ENCODE measurements at regions of chr3 and their contacts with region 1.

Region 1: GRCh38 chr3:141441381-141442364 is 45.2 kb upstream of the RASA2 start:
- DNase-seq: peak; percentile 53 to 78 (median 71)
- H3K4me3 ChIP-seq: no peak overlapping the region
- H3K4me3 Mint-ChIP-seq: peak overlapping the region in 5 of 8 donors; percentile 6 to 59 (median 52)
- H3K27ac ChIP-seq: peak overlapping the region; percentile 29
- H3K27ac Mint-ChIP-seq: peak overlapping the region; percentile 18 to 86 (median 59)
- H3K4me1 ChIP-seq: peaks cover 17% of the 10 kb centered on the region
- H3K4me1 Mint-ChIP-seq: peaks cover 20 to 55% (median 34%) of the 10 kb centered on the region in 4 donors
- H3K27me3 ChIP-seq: no peaks in the 10 kb centered on the region
- H3K27me3 Mint-ChIP-seq: no peaks in the 10 kb centered on the region

Region 2: DNA sequence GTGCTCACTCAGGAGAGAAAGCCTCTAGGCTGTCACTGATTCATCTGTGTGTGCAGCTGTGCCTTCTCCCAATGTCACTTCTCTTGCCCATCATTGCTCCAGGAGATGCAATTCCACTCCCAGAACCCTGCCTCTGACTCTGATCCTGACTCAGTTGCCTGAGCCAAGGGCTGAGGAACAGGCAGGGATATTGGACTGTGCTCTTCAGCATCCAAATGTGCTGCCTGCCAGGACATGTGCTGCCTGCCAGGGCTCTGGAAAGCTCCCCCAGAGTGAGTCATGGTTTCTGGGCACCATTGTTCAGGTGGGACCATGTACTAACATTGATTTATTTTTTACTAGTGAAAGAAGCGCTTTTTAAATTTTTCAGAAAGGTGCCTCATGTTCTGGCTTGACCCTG is 692.8 kb before region 1 on chr3:
- CTCF ChIA-PET with region 1: no interaction called
- POLR2A ChIA-PET with region 1: no interaction called
- intact Hi-C with region 1: no loop called
- DNase-seq: no peak
- H3K4me3 ChIP-seq: no peak overlapping the region
- H3K4me3 Mint-ChIP-seq: no peak overlapping the region
- H3K27ac ChIP-seq: no peak overlapping the region
- H3K27ac Mint-ChIP-seq: no peak overlapping the region
- H3K4me1 ChIP-seq: no peaks in the 10 kb centered on the region
- H3K4me1 Mint-ChIP-seq: no peaks in the 10 kb centered on the region
- H3K27me3 ChIP-seq: no peaks in the 10 kb centered on the region
- H3K27me3 Mint-ChIP-seq: peaks cover 0 to 8% of the 10 kb centered on the region in 2 donors

Region 3: DNA sequence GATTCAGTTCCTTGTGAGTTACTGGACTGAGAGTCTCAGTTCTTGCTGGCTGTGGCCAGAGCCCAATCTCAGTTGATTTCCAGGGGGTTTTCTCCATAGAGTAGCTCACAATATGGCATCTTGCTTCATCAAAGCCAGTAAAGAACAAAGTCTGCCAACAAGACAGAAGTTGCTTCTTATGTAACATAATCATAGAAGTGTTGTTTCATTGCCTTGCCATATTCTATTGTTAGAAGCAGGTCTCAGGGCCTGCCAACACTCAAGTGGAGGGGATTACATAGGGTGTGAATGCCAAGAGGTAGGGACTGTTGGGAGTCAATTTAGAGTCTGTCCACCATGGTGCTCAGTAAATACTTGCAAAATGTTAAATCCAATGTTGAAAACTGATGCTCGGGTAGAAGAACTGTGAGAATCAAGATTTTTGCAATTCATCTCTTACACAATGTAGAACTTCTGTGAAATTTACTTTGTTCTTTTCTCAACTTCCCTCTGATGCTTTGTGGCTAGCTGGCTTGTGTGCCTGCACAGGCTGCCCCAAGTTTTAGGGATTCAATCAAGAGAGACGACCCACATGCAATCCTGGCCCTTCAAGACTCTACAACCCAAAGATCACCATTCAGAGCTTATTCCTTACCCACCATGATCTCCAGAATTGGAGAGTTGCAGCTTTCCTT is 223.4 kb before region 1 on chr3:
- CTCF ChIA-PET with region 1: no interaction called
- POLR2A ChIA-PET with region 1: no interaction called
- intact Hi-C with region 1: no loop called
- DNase-seq: no peak
- H3K4me3 ChIP-seq: no peak overlapping the region
- H3K4me3 Mint-ChIP-seq: no peak overlapping the region
- H3K27ac ChIP-seq: no peak overlapping the region
- H3K27ac Mint-ChIP-seq: no peak overlapping the region
- H3K4me1 ChIP-seq: no peaks in the 10 kb centered on the region
- H3K4me1 Mint-ChIP-seq: no peaks in the 10 kb centered on the region
- H3K27me3 ChIP-seq: peaks cover 4% of the 10 kb centered on the region
- H3K27me3 Mint-ChIP-seq: peaks cover 3 to 5% of the 10 kb centered on the region in 2 donors

Region 4: GRCh38 chr3:141303481-141304223 is 138.0 kb before region 1 on chr3:
- CTCF ChIA-PET with region 1: interaction called, 93 read pairs
- POLR2A ChIA-PET with region 1: interaction called, 3 read pairs
- intact Hi-C with region 1: loop called (anchors 1 kb)
- DNase-seq: peak; percentile 69 to 79 (median 76)
- H3K4me3 ChIP-seq: no peak overlapping the region
- H3K4me3 Mint-ChIP-seq: no peak overlapping the region
- H3K27ac ChIP-seq: no peak overlapping the region
- H3K27ac Mint-ChIP-seq: peak overlapping the region in 2 of 7 donors; percentile 7 to 25
- H3K4me1 ChIP-seq: peaks cover 39% of the 10 kb centered on the region
- H3K4me1 Mint-ChIP-seq: peaks cover 27 to 50% (median 45%) of the 10 kb centered on the region in 4 donors
- H3K27me3 ChIP-seq: no peaks in the 10 kb centered on the region
- H3K27me3 Mint-ChIP-seq: no peaks in the 10 kb centered on the region

Region 5: DNA sequence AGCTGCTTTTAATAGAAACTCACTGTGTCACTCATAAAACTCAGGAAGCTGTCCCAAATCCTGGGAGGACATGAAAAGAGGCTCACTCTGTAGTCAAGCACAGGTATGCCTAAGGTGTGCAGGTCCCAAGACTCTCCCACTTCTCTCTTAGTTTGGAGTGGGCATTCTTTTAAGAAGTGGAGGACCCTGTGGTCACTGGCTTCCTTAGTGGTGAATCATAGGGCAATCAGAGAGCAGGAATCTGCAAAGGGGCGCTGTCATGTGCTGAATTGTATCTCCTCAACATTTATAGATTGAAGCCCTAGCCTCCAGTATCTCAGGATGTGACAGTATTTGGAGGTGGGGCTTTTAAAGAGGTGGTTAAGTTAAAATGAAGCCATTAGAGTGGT is 120.6 kb before region 1 on chr3:
- CTCF ChIA-PET with region 1: interaction called, 16 read pairs
- POLR2A ChIA-PET with region 1: no interaction called
- intact Hi-C with region 1: no loop called
- DNase-seq: no peak
- H3K4me3 ChIP-seq: no peak overlapping the region
- H3K4me3 Mint-ChIP-seq: peak overlapping the region in 6 of 8 donors; percentile 0 to 77 (median 62)
- H3K27ac ChIP-seq: no peak overlapping the region
- H3K27ac Mint-ChIP-seq: peak overlapping the region; percentile 48 to 93 (median 86)
- H3K4me1 ChIP-seq: peaks cover 19% of the 10 kb centered on the region
- H3K4me1 Mint-ChIP-seq: peaks cover 15 to 28% (median 23%) of the 10 kb centered on the region in 4 donors
- H3K27me3 ChIP-seq: no peaks in the 10 kb centered on the region
- H3K27me3 Mint-ChIP-seq: no peaks in the 10 kb centered on the region

Region 6: DNA sequence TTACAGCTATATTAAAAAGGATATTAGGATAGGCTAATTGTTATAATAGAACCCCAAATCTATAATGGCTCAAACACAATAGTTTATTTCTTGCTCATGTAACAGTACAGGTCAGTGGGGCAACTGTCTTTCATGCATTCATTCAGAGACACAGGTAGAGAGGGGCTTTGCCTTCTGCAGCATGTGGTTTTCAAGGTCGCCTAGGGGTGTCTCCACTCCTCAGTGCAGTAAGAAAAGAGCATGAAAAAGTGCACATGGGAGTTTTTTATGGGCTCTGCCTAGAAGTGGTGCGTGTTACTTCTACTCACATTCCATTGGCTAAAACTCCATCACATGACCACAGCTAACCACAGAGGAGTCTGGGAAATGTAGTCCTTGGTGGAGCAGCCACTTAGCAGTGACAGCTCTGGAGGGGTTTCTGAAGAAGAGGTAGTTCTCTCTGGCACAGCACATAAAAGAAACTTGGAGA is 71.6 kb before region 1 on chr3:
- CTCF ChIA-PET with region 1: interaction called, 79 read pairs
- POLR2A ChIA-PET with region 1: interaction called, 3 read pairs
- intact Hi-C with region 1: loop called (anchors 1 kb)
- DNase-seq: peak; percentile 82 to 88 (median 84)
- H3K4me3 ChIP-seq: no peak overlapping the region
- H3K4me3 Mint-ChIP-seq: no peak overlapping the region
- H3K27ac ChIP-seq: no peak overlapping the region
- H3K27ac Mint-ChIP-seq: peak overlapping the region in 6 of 7 donors; percentile 30 to 90 (median 58)
- H3K4me1 ChIP-seq: no peaks in the 10 kb centered on the region
- H3K4me1 Mint-ChIP-seq: peaks cover 5 to 11% (median 8%) of the 10 kb centered on the region in 4 donors
- H3K27me3 ChIP-seq: no peaks in the 10 kb centered on the region
- H3K27me3 Mint-ChIP-seq: no peaks in the 10 kb centered on the region

Region 7: DNA sequence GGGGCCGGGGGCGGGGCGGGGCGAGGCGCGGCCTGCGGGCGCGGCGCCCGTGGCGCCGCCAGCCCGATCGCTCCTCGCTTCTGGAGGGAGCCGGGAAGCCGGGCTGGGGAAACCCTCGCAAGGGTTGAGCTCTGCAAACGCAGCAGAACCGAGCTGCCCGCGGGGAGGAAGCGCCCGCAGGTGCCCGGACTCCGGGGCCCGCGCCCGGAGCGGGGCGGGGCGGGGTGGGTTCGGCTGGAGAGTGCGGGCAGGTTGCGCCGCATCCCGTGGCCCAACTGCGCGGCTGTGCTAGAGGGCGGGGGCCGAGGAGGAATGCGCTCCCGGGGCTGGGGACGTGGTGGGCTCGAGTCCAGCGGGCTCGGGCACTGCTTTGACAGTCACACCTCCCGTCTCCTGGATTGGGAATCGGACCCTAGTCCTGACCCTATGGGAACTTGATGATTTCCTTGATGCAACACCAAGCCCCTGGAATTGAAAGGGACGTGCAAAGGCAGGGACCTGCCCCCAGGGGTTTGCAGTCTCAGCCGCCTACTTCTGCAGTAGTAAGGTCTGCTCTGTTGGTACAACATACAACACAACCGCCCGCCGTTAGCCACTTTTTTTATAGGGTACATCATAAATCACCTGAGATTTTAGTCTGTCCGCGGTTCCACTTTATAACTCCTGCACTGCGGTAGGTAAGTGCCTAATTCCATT is 39.0 kb before region 1 on chr3:
- CTCF ChIA-PET with region 1: interaction called, 15 read pairs
- POLR2A ChIA-PET with region 1: interaction called, 3 read pairs
- intact Hi-C with region 1: loop called (anchors 1 kb)
- DNase-seq: peak; percentile 47 to 64 (median 52)
- H3K4me3 ChIP-seq: peak overlapping the region; percentile 55 to 79
- H3K4me3 Mint-ChIP-seq: peak overlapping the region; percentile 89 to 96 (median 95)
- H3K27ac ChIP-seq: peak overlapping the region; percentile 85
- H3K27ac Mint-ChIP-seq: peak overlapping the region; percentile 90 to 97 (median 95)
- H3K4me1 ChIP-seq: peaks cover 73% of the 10 kb centered on the region
- H3K4me1 Mint-ChIP-seq: peaks cover 46 to 75% (median 60%) of the 10 kb centered on the region in 4 donors
- H3K27me3 ChIP-seq: no peaks in the 10 kb centered on the region
- H3K27me3 Mint-ChIP-seq: no peaks in the 10 kb centered on the region

Region 8: DNA sequence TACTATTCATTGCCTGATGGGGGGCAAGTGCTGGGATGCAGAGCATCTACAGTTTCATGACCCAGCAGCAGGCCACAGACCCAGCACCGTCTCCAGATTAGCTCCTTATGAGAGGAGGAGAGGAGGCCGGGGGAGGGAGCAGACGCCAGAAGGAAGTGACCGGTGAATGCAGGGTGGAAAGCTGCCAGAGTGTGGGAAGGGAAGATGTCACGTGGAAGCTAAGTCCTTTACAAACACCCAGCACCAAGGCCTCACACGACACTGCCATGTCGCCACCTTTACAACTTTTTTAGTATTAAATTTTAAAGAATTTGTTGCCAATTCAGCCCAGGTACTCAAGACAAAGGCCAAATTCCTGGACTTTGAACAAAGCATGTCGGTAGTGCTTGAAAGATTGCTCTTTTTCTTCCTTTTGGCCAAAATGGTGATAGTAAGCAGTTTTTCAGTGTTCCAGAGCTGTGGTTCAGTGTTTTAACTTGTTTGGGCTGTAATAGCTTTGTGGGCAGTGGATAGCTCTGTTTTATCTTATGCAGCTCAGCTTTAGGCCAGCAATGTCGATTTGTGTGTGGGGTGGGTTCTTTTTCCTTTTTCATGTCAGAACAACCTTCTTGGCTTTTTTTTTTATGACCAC is 15.2 kb before region 1 on chr3:
- CTCF ChIA-PET with region 1: interaction called, 41 read pairs
- POLR2A ChIA-PET with region 1: interaction called, 4 read pairs
- intact Hi-C with region 1: no loop called
- DNase-seq: no peak
- H3K4me3 ChIP-seq: no peak overlapping the region
- H3K4me3 Mint-ChIP-seq: no peak overlapping the region
- H3K27ac ChIP-seq: no peak overlapping the region
- H3K27ac Mint-ChIP-seq: peak overlapping the region in 6 of 7 donors; percentile 16 to 74 (median 50)
- H3K4me1 ChIP-seq: peaks cover 27% of the 10 kb centered on the region
- H3K4me1 Mint-ChIP-seq: peaks cover 8 to 48% (median 35%) of the 10 kb centered on the region in 4 donors
- H3K27me3 ChIP-seq: no peaks in the 10 kb centered on the region
- H3K27me3 Mint-ChIP-seq: no peaks in the 10 kb centered on the region

Region 9: GRCh38 chr3:141460097-141460704 is 18.5 kb after region 1 on chr3:
- CTCF ChIA-PET with region 1: interaction called, 65 read pairs
- POLR2A ChIA-PET with region 1: interaction called, 5 read pairs
- intact Hi-C with region 1: no loop called
- DNase-seq: peak; percentile 80 to 87 (median 82)
- H3K4me3 ChIP-seq: no peak overlapping the region
- H3K4me3 Mint-ChIP-seq: no peak overlapping the region
- H3K27ac ChIP-seq: no peak overlapping the region
- H3K27ac Mint-ChIP-seq: peak overlapping the region in 2 of 7 donors; percentile 6 to 18
- H3K4me1 ChIP-seq: peaks cover under 1% of the 10 kb centered on the region
- H3K4me1 Mint-ChIP-seq: peaks cover under 1 to 13% (median 6%) of the 10 kb centered on the region in 4 donors
- H3K27me3 ChIP-seq: no peaks in the 10 kb centered on the region
- H3K27me3 Mint-ChIP-seq: no peaks in the 10 kb centered on the region

Region 10: DNA sequence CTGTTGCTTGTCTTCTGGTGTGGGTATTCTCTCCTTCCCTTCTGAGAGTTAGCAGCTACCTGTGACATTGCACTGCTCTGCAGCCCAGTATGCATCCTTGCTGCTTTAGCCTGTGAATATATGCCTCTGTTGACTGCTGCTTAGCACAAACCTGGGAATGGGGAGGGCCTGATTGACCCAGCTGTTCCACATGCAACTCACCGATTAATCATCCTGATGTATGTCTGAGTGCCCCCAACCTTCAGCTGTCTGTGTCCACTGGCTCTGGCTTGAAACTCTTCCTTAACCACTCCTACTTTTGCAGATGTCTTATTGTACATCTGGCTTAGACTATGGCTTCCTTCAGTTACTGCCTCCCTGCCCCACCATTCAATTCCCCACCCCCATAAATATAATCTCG is 164.2 kb after region 1 on chr3:
- CTCF ChIA-PET with region 1: no interaction called
- POLR2A ChIA-PET with region 1: no interaction called
- intact Hi-C with region 1: no loop called
- DNase-seq: no peak
- H3K4me3 ChIP-seq: no peak overlapping the region
- H3K4me3 Mint-ChIP-seq: no peak overlapping the region
- H3K27ac ChIP-seq: no peak overlapping the region
- H3K27ac Mint-ChIP-seq: peak overlapping the region; percentile 12 to 68 (median 39)
- H3K4me1 ChIP-seq: no peaks in the 10 kb centered on the region
- H3K4me1 Mint-ChIP-seq: peaks cover 0 to 4% (median 3%) of the 10 kb centered on the region in 4 donors
- H3K27me3 ChIP-seq: no peaks in the 10 kb centered on the region
- H3K27me3 Mint-ChIP-seq: no peaks in the 10 kb centered on the region

Region 11: DNA sequence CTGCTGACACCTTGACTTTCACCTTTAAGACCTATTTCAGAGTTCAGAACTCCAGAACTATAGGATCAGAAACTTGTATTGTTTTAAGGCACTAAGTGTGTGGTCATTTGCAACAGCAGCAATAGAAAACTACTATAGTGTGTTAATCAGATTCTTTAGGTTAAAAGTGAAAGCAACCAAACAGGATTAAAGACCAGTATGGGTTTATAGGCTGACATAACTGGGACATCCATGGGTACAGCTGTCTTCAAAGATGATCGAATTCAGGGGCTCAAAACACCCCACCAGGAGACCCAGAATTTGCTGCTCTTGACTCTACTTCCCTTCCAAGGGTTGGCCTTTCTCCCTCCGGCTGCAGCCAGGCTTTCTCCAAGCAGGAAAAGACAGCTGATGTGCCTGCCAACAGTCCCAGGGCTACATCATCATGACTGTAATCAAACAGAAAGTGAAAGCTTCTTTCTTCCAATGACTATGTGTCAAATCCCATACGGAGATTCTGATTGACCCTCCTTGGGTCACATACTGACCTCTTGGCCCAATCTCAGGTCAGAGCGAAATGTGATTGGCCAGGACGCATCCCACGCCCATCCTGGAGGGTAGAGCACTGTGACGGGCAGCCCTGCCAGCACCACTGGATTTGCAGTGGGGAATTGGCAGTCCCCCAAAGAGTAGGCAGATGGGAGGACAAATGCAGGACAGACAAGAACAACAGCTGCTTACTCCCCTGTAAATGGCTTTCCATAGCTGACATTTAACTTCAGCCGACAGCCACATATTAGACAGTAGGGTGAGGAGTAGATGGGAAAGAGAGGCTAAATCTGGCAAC is 245.0 kb after region 1 on chr3:
- CTCF ChIA-PET with region 1: no interaction called
- POLR2A ChIA-PET with region 1: no interaction called
- intact Hi-C with region 1: no loop called
- DNase-seq: peak in 3 of 5 donors; percentile 7 to 24 (median 10)
- H3K4me3 ChIP-seq: peak overlapping the region; percentile 44 to 47
- H3K4me3 Mint-ChIP-seq: peak overlapping the region; percentile 62 to 91 (median 84)
- H3K27ac ChIP-seq: no peak overlapping the region
- H3K27ac Mint-ChIP-seq: peak overlapping the region; percentile 7 to 96 (median 90)
- H3K4me1 ChIP-seq: peaks cover 11% of the 10 kb centered on the region
- H3K4me1 Mint-ChIP-seq: peaks cover 12 to 30% (median 22%) of the 10 kb centered on the region in 4 donors
- H3K27me3 ChIP-seq: no peaks in the 10 kb centered on the region
- H3K27me3 Mint-ChIP-seq: no peaks in the 10 kb centered on the region

Measured in CD4-positive, alpha-beta memory T cell (primary cell).